ENCODE measurements at regions of chr17 and their contacts with region 1.

Region 1: GRCh38 chr17:8294814-8295316 is 335 bp downstream of the SLC25A35 start:
- DNase-seq: no peak
- H3K4me3 ChIP-seq: peak overlapping the region; percentile 61 to 85 (median 72)
- H3K27ac ChIP-seq: peak overlapping the region; percentile 85 to 97 (median 88)
- H3K4me1 ChIP-seq: peaks cover 0 to 61% (median 33%) of the 10 kb centered on the region in 6 donors
- H3K27me3 ChIP-seq: no peaks in the 10 kb centered on the region
- CTCF ChIP-seq: no peak
- POLR2A ChIP-seq: no peak

Region 2: GRCh38 chr17:8222630-8223356 is 72.1 kb before region 1 on chr17:
- intact Hi-C with region 1: loop called (anchors 10 kb)
- DNase-seq: peak; percentile 97
- H3K4me3 ChIP-seq: peak overlapping the region; percentile 54 to 79 (median 66)
- H3K27ac ChIP-seq: peak overlapping the region; percentile 94 to 99 (median 98)
- H3K4me1 ChIP-seq: peaks cover 18 to 74% (median 46%) of the 10 kb centered on the region in 6 donors
- H3K27me3 ChIP-seq: no peaks in the 10 kb centered on the region
- CTCF ChIP-seq: peak in 2 of 11 experiments; percentile 3 to 13
- POLR2A ChIP-seq: peak in 2 of 3 donors; percentile 38 to 75